AG04449 (cell line): ENCODE measurements at regions of chr1 and their contacts with region 1.

Region 1: GRCh38 chr1:168234846-168235547 is 9.2 kb downstream of the SFT2D2 start:
- DNase-seq: no peak
- H3K4me3 ChIP-seq: no peak overlapping the region
- CTCF ChIP-seq: peak; percentile 68

Region 2: GRCh38 chr1:168246506-168246905 is 11.5 kb after region 1 on chr1:
- CTCF ChIA-PET with region 1: interaction called, 15 read pairs
- POLR2A ChIA-PET with region 1: no interaction called
- DNase-seq: no peak
- H3K4me3 ChIP-seq: no peak overlapping the region
- CTCF ChIP-seq: no peak

Region 3: DNA sequence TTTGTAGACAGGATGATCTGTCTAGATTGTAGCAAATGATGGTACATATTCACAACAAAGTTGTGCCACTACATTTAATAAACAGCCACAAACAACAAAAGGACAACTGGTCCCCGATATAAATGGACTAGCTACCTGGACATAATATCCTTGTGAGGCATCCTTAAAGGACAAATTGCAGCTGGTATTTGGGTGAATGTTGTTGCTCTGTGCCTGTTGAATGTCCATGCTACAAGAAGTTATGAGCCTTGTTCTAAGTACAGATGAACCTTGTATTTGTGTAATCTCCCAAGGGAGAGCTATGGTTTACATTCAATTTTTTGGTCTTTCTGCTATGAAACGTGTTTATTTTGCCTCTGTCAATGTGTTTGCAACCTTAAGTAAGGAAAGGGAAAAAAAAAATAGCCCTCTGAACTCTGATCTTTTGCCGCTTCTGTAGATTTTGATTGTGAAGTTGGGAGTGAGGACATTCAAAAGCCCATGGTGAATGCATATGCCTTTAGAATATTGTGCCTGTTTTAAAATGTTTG is 17.3 kb after region 1 on chr1:
- CTCF ChIA-PET with region 1: interaction called, 13 read pairs
- POLR2A ChIA-PET with region 1: no interaction called
- DNase-seq: no peak
- H3K4me3 ChIP-seq: no peak overlapping the region
- CTCF ChIP-seq: no peak